CD4-positive, alpha-beta memory T cell (primary cell): ENCODE measurements at regions of chr10 and their contacts with region 1.

Region 1: GRCh38 chr10:5645375-5645774 is 21.0 kb downstream of the ASB13 start:
- DNase-seq: no peak
- H3K4me3 ChIP-seq: no peak overlapping the region
- H3K4me3 Mint-ChIP-seq: no peak overlapping the region
- H3K27ac ChIP-seq: no peak overlapping the region
- H3K27ac Mint-ChIP-seq: peak overlapping the region in 1 of 7 donors; percentile 4
- H3K4me1 ChIP-seq: no peaks in the 10 kb centered on the region
- H3K4me1 Mint-ChIP-seq: no peaks in the 10 kb centered on the region
- H3K27me3 ChIP-seq: no peaks in the 10 kb centered on the region
- H3K27me3 Mint-ChIP-seq: no peaks in the 10 kb centered on the region

Region 2: DNA sequence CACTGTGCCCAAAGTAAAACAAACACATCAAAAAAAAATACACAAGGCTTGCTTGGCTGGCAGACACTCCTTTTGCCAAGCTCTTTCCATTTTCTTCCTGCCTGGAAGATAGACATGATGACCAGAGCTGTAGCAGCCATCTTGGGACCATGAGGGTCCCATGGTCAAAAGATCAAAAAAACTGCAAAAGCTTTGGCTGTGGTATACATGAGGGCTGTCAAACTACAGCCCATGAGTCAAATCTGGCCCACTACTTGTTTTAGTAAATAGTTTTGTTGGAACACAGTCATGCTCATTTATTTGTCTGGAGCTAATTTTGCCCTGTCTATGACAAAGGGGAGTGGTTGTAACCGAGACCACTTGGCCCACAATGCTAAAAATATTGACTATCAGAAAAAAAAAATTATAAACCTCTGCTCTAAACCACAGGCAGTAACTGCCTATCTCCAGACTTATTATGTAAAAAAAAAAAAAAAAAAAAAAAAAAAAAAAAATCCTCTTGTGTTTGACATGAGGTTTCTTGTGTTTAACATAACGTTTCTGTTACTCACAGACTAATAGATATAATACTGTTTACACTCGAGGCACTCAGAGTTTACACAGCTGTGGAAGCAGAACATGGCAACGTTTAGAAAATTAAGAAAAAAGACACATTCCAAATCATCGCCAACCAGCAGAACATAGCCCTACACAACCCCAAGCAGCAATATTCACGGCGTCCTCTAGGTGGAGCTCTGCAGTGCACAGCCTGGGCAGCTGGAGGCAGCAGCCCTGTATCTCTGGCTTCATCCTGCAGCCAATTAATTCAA is 15.9 kb before region 1 on chr10:
- CTCF ChIA-PET with region 1: interaction called, 14 read pairs
- POLR2A ChIA-PET with region 1: no interaction called
- intact Hi-C with region 1: no loop called
- DNase-seq: peak; percentile 76 to 83 (median 79)
- H3K4me3 ChIP-seq: no peak overlapping the region
- H3K4me3 Mint-ChIP-seq: peak overlapping the region in 6 of 8 donors; percentile 34 to 73 (median 52)
- H3K27ac ChIP-seq: no peak overlapping the region
- H3K27ac Mint-ChIP-seq: peak overlapping the region in 2 of 7 donors; percentile 32 to 76
- H3K4me1 ChIP-seq: peaks cover 11% of the 10 kb centered on the region
- H3K4me1 Mint-ChIP-seq: peaks cover 9 to 17% (median 12%) of the 10 kb centered on the region in 4 donors
- H3K27me3 ChIP-seq: no peaks in the 10 kb centered on the region
- H3K27me3 Mint-ChIP-seq: peaks cover 3 to 4% of the 10 kb centered on the region in 2 donors